Astrocyte of the cerebellum (primary cell): ENCODE measurements at regions of chr1 and their contacts with region 1.

Region 1: GRCh38 chr1:63155437-63155836 is 166.9 kb upstream of the FOXD3 start:
- DNase-seq: no peak
- H3K4me3 ChIP-seq: no peak overlapping the region
- CTCF ChIP-seq: no peak

Region 2: GRCh38 chr1:63189677-63190076 is 34.2 kb after region 1 on chr1:
- in situ Hi-C with region 1: loop called (anchors 5 kb)
- DNase-seq: no peak
- H3K4me3 ChIP-seq: no peak overlapping the region
- CTCF ChIP-seq: no peak

Region 3: DNA sequence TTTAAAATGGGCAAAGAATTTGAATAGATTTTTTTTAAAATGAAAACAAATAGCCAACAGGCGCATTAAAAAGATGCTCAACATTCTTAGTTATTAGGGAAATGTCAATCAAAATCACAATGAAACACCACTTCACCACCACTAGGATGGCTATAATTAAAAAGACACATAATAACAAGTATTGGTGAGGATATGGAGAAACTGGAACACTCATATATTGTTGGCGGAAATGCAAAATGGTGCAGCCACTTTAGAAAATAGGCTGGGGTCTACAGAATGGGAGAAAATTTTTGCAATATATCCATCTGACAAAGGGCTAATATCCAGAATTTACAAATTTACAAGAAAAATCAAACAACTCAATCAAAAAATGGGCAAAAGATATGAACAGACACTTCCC is 59.1 kb after region 1 on chr1:
- in situ Hi-C with region 1: no loop called
- DNase-seq: no peak
- H3K4me3 ChIP-seq: no peak overlapping the region
- CTCF ChIP-seq: no peak